ENCODE measurements at regions of chr11 and their contacts with region 1.

Region 1: GRCh38 chr11:123110356-123110755 is 48.4 kb upstream of the HSPA8 start:
- DNase-seq: no peak

Region 2: GRCh38 chr11:122756417-122756816 is 353.9 kb before region 1 on chr11:
- intact Hi-C with region 1: no loop called
- DNase-seq: peak in 19 of 42 donors; percentile 16 to 55 (median 34)

Region 3: GRCh38 chr11:123246749-123247495 is 136.6 kb after region 1 on chr11:
- intact Hi-C with region 1: loop called (anchors 2 kb)
- DNase-seq: peak; percentile 68 to 92 (median 84)

Measured in head of caudate nucleus (tissue), 42 donors.